A549 (cell line): ENCODE measurements at regions of chr2 and their contacts with region 1.

Region 1: DNA sequence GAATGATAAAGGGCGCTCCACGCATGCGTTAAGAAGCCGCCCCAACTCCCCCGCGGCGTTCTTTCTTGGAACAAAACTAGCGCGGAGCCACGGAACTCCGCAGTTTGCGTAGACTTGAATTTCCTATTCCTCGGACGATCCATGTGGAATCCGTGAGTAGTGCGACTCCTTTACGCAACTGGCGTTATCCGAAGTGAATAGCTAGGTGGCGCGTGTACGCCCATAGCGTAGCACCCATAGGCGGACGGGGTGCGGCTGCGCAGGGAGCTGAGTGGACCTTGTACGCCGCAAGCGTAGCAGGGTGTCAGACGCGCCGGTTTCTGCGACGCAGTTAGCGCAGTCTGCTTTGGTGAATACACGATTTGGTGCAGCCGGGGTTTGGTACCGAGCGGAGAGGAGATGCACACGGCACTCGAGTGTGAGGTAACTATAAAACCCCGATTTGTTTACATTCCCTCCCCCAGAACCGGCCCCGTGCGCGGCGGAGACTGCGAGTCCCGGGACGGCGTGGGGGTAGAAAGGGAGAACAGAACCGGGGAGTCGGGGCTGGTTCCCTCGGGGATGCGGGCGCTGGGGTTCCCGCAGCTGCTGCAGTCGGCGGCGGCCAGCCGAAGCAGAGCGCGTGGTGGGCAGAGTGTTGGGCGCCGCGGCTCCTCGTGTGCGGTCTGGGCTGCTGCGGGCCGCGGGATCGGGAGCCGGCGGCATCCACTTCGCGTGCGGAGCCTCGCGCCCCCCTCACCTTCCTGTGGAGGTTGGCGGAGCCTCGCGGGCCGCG is at the start of gene SLC39A10:
- DNase-seq: peak; percentile 77 to 98
- ATAC-seq: peak; percentile 85 to 88
- H3K4me3 ChIP-seq: peak within 1 kb of the TSS; percentile 95
- H3K27ac ChIP-seq: peak within 1 kb of the TSS; percentile 99
- H3K4me1 ChIP-seq: peaks cover 33% of the 10 kb centered on the region
- CTCF ChIP-seq: no peak
- EP300 ChIP-seq: no peak
- POLR2A ChIP-seq: peak; percentile 79
- RAD21 ChIP-seq: peak in 1 of 2 experiments; percentile 19; a peak in 2 of 5 replicates
- polyA plus RNA-seq, gene SLC39A10: 34.2 and 42.6 TPM in 2 replicates

Region 2: GRCh38 chr2:195318440-195319111 is 338.5 kb before region 1 on chr2:
- CTCF ChIA-PET with region 1: interaction called, 13 read pairs
- POLR2A ChIA-PET with region 1: interaction called, 10 read pairs
- DNase-seq: peak; percentile 28 to 56
- ATAC-seq: peak; percentile 48 to 71; a peak in 5 of 6 replicates
- H3K4me3 ChIP-seq: no peak overlapping the region
- H3K27ac ChIP-seq: peak overlapping the region; percentile 75 to 79
- H3K4me1 ChIP-seq: peaks cover 53% of the 10 kb centered on the region
- CTCF ChIP-seq: peak; percentile 91
- EP300 ChIP-seq: no peak
- POLR2A ChIP-seq: no peak
- RAD21 ChIP-seq: peak; percentile 93 to 95

Region 3: DNA sequence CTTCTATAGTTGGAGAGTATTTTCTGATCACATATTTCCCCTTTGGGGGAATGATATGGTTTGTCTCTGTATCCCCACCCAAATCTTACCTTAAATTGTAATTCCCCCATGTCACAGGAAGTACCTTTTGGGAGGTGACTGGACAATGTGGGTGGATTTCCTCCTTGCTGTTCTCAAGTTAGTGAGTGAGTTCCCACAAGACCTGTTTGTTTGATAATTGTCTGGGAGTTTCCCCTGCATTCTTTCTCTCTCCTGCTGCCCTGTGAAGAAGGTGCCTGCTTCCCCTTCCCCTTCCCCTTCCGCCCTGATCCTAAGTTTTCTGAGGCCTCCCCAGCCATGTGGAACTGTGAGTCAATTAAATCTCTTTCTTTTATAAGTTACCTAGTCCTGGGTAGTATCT is 222.7 kb before region 1 on chr2:
- CTCF ChIA-PET with region 1: no interaction called
- POLR2A ChIA-PET with region 1: no interaction called
- DNase-seq: no peak
- ATAC-seq: no peak
- H3K4me3 ChIP-seq: no peak overlapping the region
- H3K27ac ChIP-seq: no peak overlapping the region
- H3K4me1 ChIP-seq: no peaks in the 10 kb centered on the region
- CTCF ChIP-seq: no peak
- EP300 ChIP-seq: no peak
- POLR2A ChIP-seq: no peak
- RAD21 ChIP-seq: no peak

Region 4: GRCh38 chr2:195533771-195534642 is 123.0 kb before region 1 on chr2:
- CTCF ChIA-PET with region 1: interaction called, 22 read pairs
- POLR2A ChIA-PET with region 1: interaction called, 47 read pairs
- DNase-seq: peak; percentile 38 to 82
- ATAC-seq: peak; percentile 93 to 94
- H3K4me3 ChIP-seq: no peak overlapping the region
- H3K27ac ChIP-seq: peak overlapping the region; percentile 71 to 87
- H3K4me1 ChIP-seq: peaks cover 43% of the 10 kb centered on the region
- CTCF ChIP-seq: peak; percentile 41
- EP300 ChIP-seq: no peak
- POLR2A ChIP-seq: no peak
- RAD21 ChIP-seq: peak; percentile 12 to 31; a peak in 2 of 5 replicates

Region 5: GRCh38 chr2:195575879-195576401 is 81.1 kb before region 1 on chr2:
- CTCF ChIA-PET with region 1: interaction called, 16 read pairs
- POLR2A ChIA-PET with region 1: interaction called, 15 read pairs
- DNase-seq: peak; percentile 64 to 78
- ATAC-seq: peak; percentile 82 to 90
- H3K4me3 ChIP-seq: no peak overlapping the region
- H3K27ac ChIP-seq: peak overlapping the region; percentile 71 to 81
- H3K4me1 ChIP-seq: peaks cover 38% of the 10 kb centered on the region
- CTCF ChIP-seq: peak; percentile 46; the same call in 2 of the 3 replicates
- EP300 ChIP-seq: peak in 1 of 2 experiments; percentile 54; a peak in 1 of 5 replicates
- POLR2A ChIP-seq: no peak
- RAD21 ChIP-seq: peak; percentile 59 to 64

Region 6: GRCh38 chr2:195756201-195756927 is 99.3 kb after region 1 on chr2:
- CTCF ChIA-PET with region 1: no interaction called
- POLR2A ChIA-PET with region 1: no interaction called
- DNase-seq: no peak
- ATAC-seq: no peak
- H3K4me3 ChIP-seq: no peak overlapping the region
- H3K27ac ChIP-seq: 0 out of 6 replicates have a peak overlapping the region, but pooled peaks of 1 of the 2 experiments have one; percentile 26
- H3K4me1 ChIP-seq: peaks cover 12% of the 10 kb centered on the region
- CTCF ChIP-seq: no peak
- EP300 ChIP-seq: no peak
- POLR2A ChIP-seq: no peak
- RAD21 ChIP-seq: no peak

Region 7: GRCh38 chr2:195795879-195796278 is 138.8 kb after region 1 on chr2:
- CTCF ChIA-PET with region 1: no interaction called
- POLR2A ChIA-PET with region 1: no interaction called
- DNase-seq: peak in 1 of 2 experiments; percentile 10
- ATAC-seq: no peak; a peak in 1 of 6 replicates
- H3K4me3 ChIP-seq: no peak overlapping the region
- H3K27ac ChIP-seq: no peak overlapping the region
- H3K4me1 ChIP-seq: no peaks in the 10 kb centered on the region
- CTCF ChIP-seq: no peak
- EP300 ChIP-seq: no peak
- POLR2A ChIP-seq: no peak
- RAD21 ChIP-seq: no peak

Region 8: GRCh38 chr2:195945061-195945460 is 288.0 kb after region 1 on chr2:
- CTCF ChIA-PET with region 1: no interaction called
- POLR2A ChIA-PET with region 1: no interaction called
- DNase-seq: no peak
- ATAC-seq: no peak
- H3K4me3 ChIP-seq: no peak overlapping the region
- H3K27ac ChIP-seq: no peak overlapping the region
- H3K4me1 ChIP-seq: no peaks in the 10 kb centered on the region
- CTCF ChIP-seq: no peak
- EP300 ChIP-seq: no peak
- POLR2A ChIP-seq: no peak
- RAD21 ChIP-seq: no peak

Region 9: GRCh38 chr2:196068271-196069209 is 411.5 kb after region 1 on chr2 and contains the start of gene DNAH7:
- CTCF ChIA-PET with region 1: interaction called, 3 read pairs
- POLR2A ChIA-PET with region 1: interaction called, 10 read pairs
- DNase-seq: peak; percentile 88 to 90
- ATAC-seq: peak; percentile 98
- H3K4me3 ChIP-seq: peak within 1 kb of the TSS; percentile 67
- H3K27ac ChIP-seq: peak within 1 kb of the TSS; percentile 69 to 84
- H3K4me1 ChIP-seq: peaks cover 13% of the 10 kb centered on the region; the same call in 2 of the 3 replicates
- CTCF ChIP-seq: peak; percentile 62
- EP300 ChIP-seq: no peak
- POLR2A ChIP-seq: peak; percentile 68
- RAD21 ChIP-seq: peak; percentile 56 to 62
- polyA plus RNA-seq, gene DNAH7: 1.5 and 1.7 TPM in 2 replicates